ENCODE measurements at regions of chr17 and their contacts with region 1.

Region 1: DNA sequence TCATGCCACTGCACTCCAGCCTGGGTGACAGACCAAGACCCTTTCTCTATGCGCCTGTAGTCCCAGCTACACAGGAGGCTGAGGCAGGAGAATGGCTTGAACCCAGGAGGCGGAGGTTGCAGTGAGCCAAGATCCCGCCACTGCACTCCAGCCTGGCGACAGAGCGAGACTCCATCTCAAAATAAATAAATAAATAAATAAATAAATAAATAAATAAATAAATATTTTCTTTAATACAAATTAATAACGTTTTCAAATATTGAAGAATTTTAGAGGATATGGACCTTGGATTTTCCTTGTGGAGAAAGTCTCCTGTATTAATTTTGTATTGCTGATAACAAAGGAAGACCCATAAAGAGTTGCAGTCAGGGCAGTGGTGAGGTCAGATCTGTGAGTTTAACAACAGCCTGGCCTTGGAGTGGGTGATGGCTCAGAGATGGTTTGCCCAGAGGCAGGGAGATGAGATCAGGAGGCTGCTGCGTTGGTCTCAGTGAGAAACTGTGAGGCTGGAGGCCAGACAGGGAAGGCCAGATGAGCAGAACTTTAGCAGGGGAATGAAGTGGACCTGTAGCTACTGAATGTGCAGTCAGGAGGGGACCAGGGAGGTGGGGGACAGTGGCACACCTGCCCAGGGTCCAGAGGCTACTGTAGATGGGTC is 4.4 kb upstream of the ASGR1 start:
- DNase-seq: no peak
- ATAC-seq: no peak
- H3K4me3 Mint-ChIP-seq: no peak overlapping the region
- H3K27ac Mint-ChIP-seq: no peak overlapping the region
- H3K4me1 Mint-ChIP-seq: no peaks in the 10 kb centered on the region
- H3K27me3 Mint-ChIP-seq: no peaks in the 10 kb centered on the region

Region 2: GRCh38 chr17:6479622-6480302 is 703.8 kb before region 1 on chr17:
- CTCF ChIA-PET with region 1: no interaction called
- POLR2A ChIA-PET with region 1: no interaction called
- intact Hi-C with region 1: no loop called
- DNase-seq: no peak
- ATAC-seq: no peak
- H3K4me3 Mint-ChIP-seq: no peak overlapping the region
- H3K27ac Mint-ChIP-seq: no peak overlapping the region
- H3K4me1 Mint-ChIP-seq: no peaks in the 10 kb centered on the region
- H3K27me3 Mint-ChIP-seq: peaks cover 4% of the 10 kb centered on the region

Region 3: GRCh38 chr17:7261172-7261927 is 77.8 kb after region 1 on chr17:
- CTCF ChIA-PET with region 1: no interaction called
- POLR2A ChIA-PET with region 1: interaction called, 14 read pairs
- intact Hi-C with region 1: no loop called
- DNase-seq: peak; percentile 57
- ATAC-seq: peak; percentile 41
- H3K4me3 Mint-ChIP-seq: peak overlapping the region; percentile 45
- H3K27ac Mint-ChIP-seq: no peak overlapping the region
- H3K4me1 Mint-ChIP-seq: peaks cover 28% of the 10 kb centered on the region
- H3K27me3 Mint-ChIP-seq: peaks cover 23% of the 10 kb centered on the region

Measured in activated CD4-positive, alpha-beta T cell treated with anti-CD3 and anti-CD28 coated beads for 36 hours (primary cell).